PC-3 (cell line): ENCODE measurements at regions of chr20 and their contacts with region 1.

Region 1: GRCh38 chr20:59087829-59088433 is 45.3 kb upstream of the PRELID3B start:
- DNase-seq: peak; percentile 90
- ATAC-seq: peak; percentile 92
- H3K4me3 ChIP-seq: no peak overlapping the region
- H3K27ac ChIP-seq: no peak overlapping the region
- H3K4me1 ChIP-seq: peaks cover 2% of the 10 kb centered on the region
- H3K27me3 ChIP-seq: peaks cover 73% of the 10 kb centered on the region
- CTCF ChIP-seq: peak; percentile 98

Region 2: DNA sequence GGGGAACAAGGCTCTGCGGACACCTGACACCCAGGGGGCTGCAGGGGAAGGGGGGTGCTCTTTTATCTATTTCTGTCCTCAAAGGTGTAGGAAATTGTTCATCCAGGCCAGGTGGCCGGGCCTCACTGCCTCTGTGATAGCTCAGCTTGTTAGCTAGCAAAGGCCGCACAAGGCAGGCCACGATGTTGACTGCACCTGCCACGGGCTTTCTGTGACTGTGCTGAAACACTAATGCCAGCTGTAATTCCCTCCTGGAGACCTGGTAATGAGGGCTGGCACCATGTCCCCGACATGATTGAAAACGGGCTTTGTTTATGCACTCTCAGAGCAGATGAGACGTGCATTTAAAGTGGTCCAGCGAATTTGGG is 511.3 kb before region 1 on chr20:
- CTCF ChIA-PET with region 1: no interaction called
- POLR2A ChIA-PET with region 1: no interaction called
- intact Hi-C with region 1: no loop called
- DNase-seq: no peak
- ATAC-seq: no peak
- H3K4me3 ChIP-seq: no peak overlapping the region
- H3K27ac ChIP-seq: no peak overlapping the region
- H3K4me1 ChIP-seq: no peaks in the 10 kb centered on the region
- H3K27me3 ChIP-seq: no peaks in the 10 kb centered on the region
- CTCF ChIP-seq: no peak

Region 3: DNA sequence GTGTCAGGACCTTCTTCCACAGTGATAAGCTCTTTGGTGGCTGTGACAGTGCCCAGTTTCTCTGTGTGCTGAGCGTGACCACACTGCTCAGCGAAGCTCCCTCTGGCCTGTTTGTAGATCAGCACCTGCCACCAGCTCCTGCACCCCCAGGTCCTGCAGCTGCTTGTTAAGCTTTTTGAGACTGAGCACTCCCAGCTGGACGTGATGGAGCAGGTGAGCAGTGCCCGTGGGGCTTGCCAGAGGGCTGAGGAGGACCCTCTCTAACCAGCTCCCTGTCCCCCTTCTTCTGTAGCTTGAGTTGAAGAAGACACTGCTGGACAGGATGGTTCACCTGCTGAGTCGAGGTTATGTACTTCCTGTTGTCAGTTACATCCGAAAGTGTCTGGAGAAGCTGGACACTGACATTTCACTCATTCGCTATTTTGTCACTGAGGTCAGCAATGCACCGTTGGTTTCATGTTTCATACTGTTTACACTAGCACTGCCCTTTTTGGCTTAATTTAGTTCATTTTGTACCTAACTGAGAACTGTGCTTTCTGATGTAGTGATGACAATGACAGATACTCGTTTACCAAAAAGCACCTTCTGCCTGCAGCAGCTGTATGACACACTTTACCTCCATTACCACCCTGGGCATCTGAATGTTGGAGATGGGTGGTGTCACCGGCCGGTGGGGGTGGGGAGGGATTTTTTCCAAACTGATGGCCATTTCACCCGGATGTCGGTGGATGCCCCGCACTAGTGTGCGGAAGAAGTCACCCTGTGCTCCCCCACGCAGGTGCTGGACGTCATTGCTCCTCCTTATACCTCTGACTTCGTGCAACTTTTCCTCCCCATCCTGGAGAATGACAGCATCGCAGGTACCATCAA is 94.4 kb before region 1 on chr20:
- CTCF ChIA-PET with region 1: no interaction called
- POLR2A ChIA-PET with region 1: no interaction called
- intact Hi-C with region 1: no loop called
- DNase-seq: peak; percentile 25
- ATAC-seq: peak; percentile 73
- H3K4me3 ChIP-seq: no peak overlapping the region
- H3K27ac ChIP-seq: no peak overlapping the region
- H3K4me1 ChIP-seq: peaks cover 19% of the 10 kb centered on the region
- H3K27me3 ChIP-seq: no peaks in the 10 kb centered on the region
- CTCF ChIP-seq: no peak

Region 4: DNA sequence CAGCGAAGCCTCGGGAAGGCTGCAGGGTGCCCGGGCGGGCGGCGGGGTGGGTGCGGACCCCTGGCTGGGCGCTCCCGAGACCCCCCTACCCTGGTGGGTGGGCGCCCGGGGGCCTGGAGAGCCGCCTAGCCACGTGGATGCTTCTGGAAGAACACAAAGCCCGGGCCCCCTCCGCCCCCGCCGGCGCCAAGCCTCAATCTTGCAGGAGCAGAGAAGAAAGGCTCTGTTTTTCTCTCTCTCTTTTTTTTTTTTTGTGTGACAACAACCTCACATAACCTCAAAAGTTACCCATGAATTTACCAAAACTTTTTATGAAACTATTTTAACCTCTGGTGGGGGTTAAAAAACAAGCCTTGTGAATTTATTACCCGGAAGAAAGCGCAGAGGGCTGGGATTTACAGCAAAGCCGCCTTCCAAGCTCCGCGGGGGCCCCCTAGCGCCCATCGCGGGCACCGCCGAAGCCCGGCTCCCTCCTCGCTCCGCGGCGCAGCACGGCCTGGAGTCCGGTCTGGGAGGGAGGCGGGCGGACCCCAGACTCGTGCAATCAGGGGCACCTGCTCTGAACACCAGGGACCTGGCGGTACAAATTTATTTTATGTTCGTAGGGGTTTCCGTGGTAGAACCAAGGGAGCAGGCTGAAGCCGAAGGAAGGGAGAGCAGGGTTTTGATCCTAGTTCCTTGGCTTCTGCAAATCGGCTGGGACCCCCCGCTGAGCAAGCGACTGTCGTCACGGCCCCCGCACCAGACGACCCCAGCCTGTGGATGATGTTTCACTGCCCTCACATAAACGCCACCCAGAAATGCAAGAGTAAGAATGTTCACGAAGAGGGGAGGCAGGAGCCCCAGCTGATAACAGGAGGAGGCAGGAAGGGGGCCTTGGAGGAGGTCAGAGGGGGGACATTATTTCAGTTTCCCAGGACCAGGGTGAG is 134.6 kb after region 1 on chr20:
- CTCF ChIA-PET with region 1: interaction called, 5 read pairs
- POLR2A ChIA-PET with region 1: no interaction called
- intact Hi-C with region 1: loop called (anchors 5 kb)
- DNase-seq: peak; percentile 87
- ATAC-seq: peak; percentile 98
- H3K4me3 ChIP-seq: peak overlapping the region; percentile 71
- H3K27ac ChIP-seq: no peak overlapping the region
- H3K4me1 ChIP-seq: peaks cover 9% of the 10 kb centered on the region; the same call in 1 of the 2 replicates
- H3K27me3 ChIP-seq: peaks cover 93% of the 10 kb centered on the region
- CTCF ChIP-seq: peak; percentile 99

Region 5: GRCh38 chr20:59455402-59456341 is 367.7 kb after region 1 on chr20:
- CTCF ChIA-PET with region 1: interaction called, 11 read pairs
- POLR2A ChIA-PET with region 1: no interaction called
- intact Hi-C with region 1: loop called (anchors 1 kb)
- DNase-seq: peak; percentile 48
- ATAC-seq: peak; percentile 69
- H3K4me3 ChIP-seq: no peak overlapping the region
- H3K27ac ChIP-seq: no peak overlapping the region
- H3K4me1 ChIP-seq: no peaks in the 10 kb centered on the region
- H3K27me3 ChIP-seq: peaks cover 48% of the 10 kb centered on the region
- CTCF ChIP-seq: peak; percentile 83